ENCODE measurements at regions of chr10 and their contacts with region 1.

Region 1: DNA sequence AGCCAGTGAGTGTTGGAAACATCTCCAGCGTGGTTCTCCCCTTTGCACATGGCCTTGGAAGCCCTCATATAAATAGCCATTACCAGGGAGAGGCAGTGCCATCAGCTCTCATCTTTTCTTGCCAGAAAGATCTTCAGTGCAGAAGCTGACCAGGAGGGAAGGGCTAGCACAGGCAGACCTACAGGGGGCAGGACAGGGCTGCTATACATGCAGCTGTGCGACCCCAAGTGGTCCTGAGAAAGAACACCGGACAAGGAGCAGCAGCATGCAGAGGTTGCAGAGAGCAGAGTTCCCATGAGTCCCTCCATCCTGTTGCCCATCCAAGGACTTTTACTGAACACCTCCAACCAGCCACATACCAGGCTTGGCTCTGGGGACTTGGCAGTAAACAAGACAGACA is 17.1 kb downstream of the GRID1 start:
- DNase-seq: peak; percentile 65 to 77 (median 77)
- H3K4me3 ChIP-seq: no peak overlapping the region
- H3K27ac ChIP-seq: no peak overlapping the region
- H3K4me1 ChIP-seq: peaks cover 0 to 11% (median under 1%) of the 10 kb centered on the region in 4 experiments
- H3K27me3 ChIP-seq: peaks cover 0 to 3% (median 0%) of the 10 kb centered on the region in 5 experiments

Region 2: DNA sequence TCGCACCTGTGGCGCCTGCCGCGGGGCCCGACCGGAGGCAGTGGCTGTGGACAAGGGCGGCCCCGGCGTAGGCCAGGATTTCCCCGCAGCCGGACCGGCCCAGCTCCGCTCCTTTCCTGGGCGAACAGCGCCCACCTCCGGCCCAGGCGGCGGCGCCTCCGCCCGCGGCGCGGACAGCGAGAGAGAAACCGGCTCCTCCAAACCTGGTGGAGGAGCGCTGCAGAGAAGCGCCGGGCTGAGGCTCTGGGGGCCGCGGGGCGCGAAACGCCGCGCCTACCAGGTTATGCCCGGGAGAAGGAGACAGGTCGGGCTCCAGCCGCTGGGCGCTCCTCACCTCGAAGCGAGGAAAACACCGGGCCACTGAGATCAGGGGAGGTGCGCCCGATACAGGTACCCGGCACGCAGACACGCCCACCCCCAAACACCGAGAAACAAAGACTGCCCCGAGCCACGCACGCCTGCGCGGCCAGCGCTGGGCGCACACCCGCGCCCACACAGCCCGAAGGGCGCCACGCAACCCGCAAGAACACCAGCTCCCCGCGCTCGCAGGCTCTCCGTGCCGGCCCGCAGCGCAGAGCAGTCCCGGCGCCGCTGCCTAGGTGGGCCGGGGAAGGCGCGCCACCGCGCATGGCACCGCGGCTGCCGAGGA is 13.8 kb after region 1 on chr10:
- CTCF ChIA-PET with region 1: interaction called, 79 read pairs
- POLR2A ChIA-PET with region 1: no interaction called
- DNase-seq: peak in 1 of 3 donors; percentile 37
- H3K4me3 ChIP-seq: peak overlapping the region in 6 of 7 experiments; percentile 4 to 63 (median 32)
- H3K27ac ChIP-seq: no peak overlapping the region
- H3K4me1 ChIP-seq: peaks cover 0 to 47% (median 39%) of the 10 kb centered on the region in 4 experiments
- H3K27me3 ChIP-seq: peaks cover 0 to 74% (median 35%) of the 10 kb centered on the region in 5 experiments

Region 3: GRCh38 chr10:86368987-86369386 is 19.5 kb after region 1 on chr10:
- CTCF ChIA-PET with region 1: interaction called, 79 read pairs
- POLR2A ChIA-PET with region 1: no interaction called
- DNase-seq: no peak
- H3K4me3 ChIP-seq: no peak overlapping the region
- H3K27ac ChIP-seq: no peak overlapping the region
- H3K4me1 ChIP-seq: peaks cover 0 to 32% (median 26%) of the 10 kb centered on the region in 4 experiments
- H3K27me3 ChIP-seq: peaks cover 0 to 81% (median 52%) of the 10 kb centered on the region in 5 experiments

Region 4: DNA sequence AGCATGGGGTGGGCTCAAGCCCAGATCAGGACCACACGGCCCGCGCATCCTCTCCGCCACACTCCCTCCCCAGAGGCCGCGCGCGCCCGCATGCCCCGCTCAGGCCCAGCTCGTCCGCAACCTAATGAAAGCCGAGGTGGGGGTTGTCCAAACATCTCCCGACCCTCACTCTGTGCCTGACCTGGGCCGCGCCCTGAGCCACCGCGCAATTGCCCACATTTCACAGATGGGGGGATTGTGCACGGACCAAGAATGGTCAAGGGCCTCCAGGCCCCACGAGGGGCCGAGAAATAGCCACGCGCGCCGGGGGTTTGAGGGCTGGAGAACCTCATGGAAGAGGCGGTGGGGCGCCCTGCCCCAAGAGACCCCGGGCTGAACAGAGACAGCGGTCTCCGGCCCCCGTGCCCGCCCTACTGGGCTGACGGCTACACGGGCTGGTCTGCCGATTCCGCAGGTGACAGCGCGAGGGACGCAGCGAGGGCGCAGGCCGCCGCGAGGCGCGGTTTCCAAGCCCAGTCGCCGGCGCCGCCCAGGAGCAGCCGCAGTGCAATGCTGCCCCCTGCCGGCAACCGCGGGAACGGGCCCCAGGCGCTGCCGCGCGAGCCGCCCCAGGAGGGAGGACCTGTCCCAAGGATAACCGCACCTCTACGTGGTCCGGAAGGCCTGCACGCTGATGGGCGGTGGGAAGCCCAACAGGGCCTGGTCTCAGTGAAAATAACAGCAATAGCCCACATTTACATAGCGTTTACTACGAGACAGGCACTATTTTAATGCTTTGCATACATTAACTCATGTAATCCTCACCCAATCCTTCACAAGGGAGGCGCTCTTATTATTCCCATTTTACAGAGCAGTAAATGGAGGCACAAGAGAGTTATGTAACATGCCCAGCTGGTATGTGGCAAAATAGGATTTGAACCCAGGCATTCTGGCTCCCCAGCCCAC is 27.6 kb after region 1 on chr10:
- CTCF ChIA-PET with region 1: interaction called, 17 read pairs
- POLR2A ChIA-PET with region 1: no interaction called
- DNase-seq: peak; percentile 60 to 86 (median 83)
- H3K4me3 ChIP-seq: peak overlapping the region in 2 of 7 experiments; percentile 28 to 39
- H3K27ac ChIP-seq: no peak overlapping the region
- H3K4me1 ChIP-seq: peaks cover 0 to 4% (median 2%) of the 10 kb centered on the region in 4 experiments
- H3K27me3 ChIP-seq: peaks cover 2 to 38% (median 15%) of the 10 kb centered on the region in 5 experiments

Region 5: GRCh38 chr10:87593702-87594101 is 1244.2 kb after region 1 on chr10:
- CTCF ChIA-PET with region 1: no interaction called
- POLR2A ChIA-PET with region 1: no interaction called
- DNase-seq: no peak
- H3K4me3 ChIP-seq: no peak overlapping the region
- H3K27ac ChIP-seq: no peak overlapping the region
- H3K4me1 ChIP-seq: peaks cover 0 to 5% (median 0%) of the 10 kb centered on the region in 4 experiments
- H3K27me3 ChIP-seq: no peaks in the 10 kb centered on the region

Measured in common myeloid progenitor, CD34-positive (primary cell).